Heart right ventricle (tissue), 16 donors: ENCODE measurements at regions of chr1 and their contacts with region 1.

Region 1: GRCh38 chr1:181077576-181078242 is 10.8 kb upstream of the IER5 start:
- DNase-seq: no peak
- ATAC-seq: no peak
- H3K4me3 ChIP-seq: no peak overlapping the region
- H3K27ac ChIP-seq: no peak overlapping the region
- H3K4me1 ChIP-seq: peaks cover 0 to 13% (median 5%) of the 10 kb centered on the region in 9 donors
- H3K27me3 ChIP-seq: no peaks in the 10 kb centered on the region
- CTCF ChIP-seq: no peak

Region 2: GRCh38 chr1:181044449-181044966 is 33.2 kb before region 1 on chr1:
- intact Hi-C with region 1: loop called in 2 of 10 experiments (anchors 5 to 10 kb)
- DNase-seq: no peak
- ATAC-seq: peak in 3 of 8 donors; percentile 37 to 55 (median 50)
- H3K4me3 ChIP-seq: no peak overlapping the region
- H3K27ac ChIP-seq: peak overlapping the region in 1 of 10 donors; percentile 36
- H3K4me1 ChIP-seq: peaks cover 0 to 42% (median 3%) of the 10 kb centered on the region in 9 donors
- H3K27me3 ChIP-seq: no peaks in the 10 kb centered on the region
- CTCF ChIP-seq: no peak

Region 3: GRCh38 chr1:181128592-181129497 is 51.1 kb after region 1 on chr1:
- intact Hi-C with region 1: no loop called
- DNase-seq: peak in 1 of 2 donors; percentile 28
- ATAC-seq: peak; percentile 32 to 56 (median 52)
- H3K4me3 ChIP-seq: peak overlapping the region in 1 of 10 donors; percentile 22
- H3K27ac ChIP-seq: peak overlapping the region in 9 of 10 donors; percentile 13 to 89 (median 33)
- H3K4me1 ChIP-seq: peaks cover 10 to 81% (median 43%) of the 10 kb centered on the region in 9 donors
- H3K27me3 ChIP-seq: no peaks in the 10 kb centered on the region
- CTCF ChIP-seq: no peak